HAP-1 (cell line): ENCODE measurements at regions of chr4 and their contacts with region 1.

Region 1: GRCh38 chr4:78864405-78865024 is 74.7 kb downstream of the PAQR3 start:
- DNase-seq: peak; percentile 40 to 66
- H3K4me3 ChIP-seq: no peak overlapping the region
- H3K4me1 ChIP-seq: no peaks in the 10 kb centered on the region
- H3K27me3 ChIP-seq: no peaks in the 10 kb centered on the region; the same call in 1 of the 2 replicates

Region 2: GRCh38 chr4:78616046-78616498 is 248.4 kb before region 1 on chr4:
- in situ Hi-C with region 1: loop called (anchors 5 kb)
- DNase-seq: no peak
- H3K4me3 ChIP-seq: no peak overlapping the region
- H3K4me1 ChIP-seq: no peaks in the 10 kb centered on the region
- H3K27me3 ChIP-seq: no peaks in the 10 kb centered on the region

Region 3: GRCh38 chr4:78799551-78800495 is 64.7 kb before region 1 on chr4:
- in situ Hi-C with region 1: no loop called
- DNase-seq: no peak
- H3K4me3 ChIP-seq: no peak overlapping the region
- H3K4me1 ChIP-seq: no peaks in the 10 kb centered on the region
- H3K27me3 ChIP-seq: no peaks in the 10 kb centered on the region